RWPE1 (cell line): ENCODE measurements at regions of chr1 and their contacts with region 1.

Region 1: GRCh38 chr1:229258031-229258756 is 12.7 kb upstream of the RAB4A start:
- DNase-seq: peak; percentile 61
- H3K27ac ChIP-seq: peak overlapping the region; percentile 31; the same call in 1 of the 2 replicates
- CTCF ChIP-seq: peak; percentile 74

Region 2: GRCh38 chr1:228664399-228664914 is 593.7 kb before region 1 on chr1:
- CTCF ChIA-PET with region 1: interaction called, 11 read pairs
- POLR2A ChIA-PET with region 1: no interaction called
- DNase-seq: peak; percentile 68
- H3K27ac ChIP-seq: no peak overlapping the region
- CTCF ChIP-seq: peak; percentile 81

Region 3: DNA sequence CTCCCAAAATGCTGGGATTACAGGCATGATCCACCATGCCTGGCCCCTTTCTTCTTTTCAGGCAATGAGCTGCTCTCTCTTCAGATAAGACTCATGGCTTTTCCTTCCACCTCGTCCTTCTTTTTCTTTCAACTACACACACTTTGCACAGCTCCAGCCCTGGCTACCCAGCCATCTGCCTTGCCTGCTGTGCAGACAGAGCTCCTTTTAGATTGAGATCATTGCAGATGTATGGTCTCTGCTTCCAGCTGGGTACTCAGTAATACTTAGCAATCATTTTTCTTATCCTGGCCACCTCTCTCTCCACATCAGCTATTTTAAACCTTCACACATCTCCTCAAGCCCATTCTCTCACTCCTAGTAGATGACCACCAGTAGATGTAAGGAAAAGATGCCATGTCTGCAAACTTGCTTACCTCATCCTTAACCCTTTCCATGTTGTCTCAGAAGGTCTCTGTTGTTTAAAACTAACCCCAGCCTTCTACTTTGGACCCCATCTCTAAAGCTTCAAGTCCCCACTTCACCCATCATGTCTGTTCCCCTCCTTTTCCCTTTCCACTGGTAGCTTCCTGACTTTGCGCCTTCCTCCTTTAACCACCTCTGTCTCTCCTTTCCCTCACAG is 20.0 kb after region 1 on chr1:
- CTCF ChIA-PET with region 1: no interaction called
- POLR2A ChIA-PET with region 1: no interaction called
- DNase-seq: no peak
- H3K27ac ChIP-seq: no peak overlapping the region
- CTCF ChIP-seq: no peak

Region 4: DNA sequence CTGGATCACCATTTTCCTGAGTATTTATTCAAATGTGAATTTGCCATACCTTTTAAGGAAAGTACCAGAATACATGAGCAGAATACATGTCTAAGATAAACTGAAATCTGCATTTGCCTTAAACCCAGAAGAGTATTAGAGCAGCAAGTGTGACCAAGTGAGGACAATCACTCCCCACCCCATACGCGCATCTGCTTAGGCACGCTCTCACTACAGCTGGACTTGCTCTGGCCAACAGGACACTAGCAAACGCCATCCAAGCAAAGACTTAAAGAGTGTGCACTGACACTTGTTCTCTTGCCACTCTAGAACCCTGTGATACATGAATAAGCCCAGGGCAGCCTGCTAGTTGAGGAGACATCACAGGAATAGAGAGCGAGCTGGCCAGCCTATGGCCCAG is 224.3 kb after region 1 on chr1:
- CTCF ChIA-PET with region 1: interaction called, 16 read pairs
- POLR2A ChIA-PET with region 1: no interaction called
- DNase-seq: no peak
- H3K27ac ChIP-seq: no peak overlapping the region
- CTCF ChIP-seq: no peak